Testis (tissue), 5 donors: ENCODE measurements at regions of chr3 and their contacts with region 1.

Region 1: GRCh38 chr3:50542177-50543034 is 25.1 kb downstream of the C3orf18 start:
- DNase-seq: peak; percentile 87
- H3K4me3 ChIP-seq: no peak overlapping the region
- H3K27ac ChIP-seq: no peak overlapping the region
- H3K4me1 ChIP-seq: no peaks in the 10 kb centered on the region
- H3K27me3 ChIP-seq: no peaks in the 10 kb centered on the region
- CTCF ChIP-seq: peak; percentile 81 to 87 (median 85)
- POLR2A ChIP-seq: no peak

Region 2: DNA sequence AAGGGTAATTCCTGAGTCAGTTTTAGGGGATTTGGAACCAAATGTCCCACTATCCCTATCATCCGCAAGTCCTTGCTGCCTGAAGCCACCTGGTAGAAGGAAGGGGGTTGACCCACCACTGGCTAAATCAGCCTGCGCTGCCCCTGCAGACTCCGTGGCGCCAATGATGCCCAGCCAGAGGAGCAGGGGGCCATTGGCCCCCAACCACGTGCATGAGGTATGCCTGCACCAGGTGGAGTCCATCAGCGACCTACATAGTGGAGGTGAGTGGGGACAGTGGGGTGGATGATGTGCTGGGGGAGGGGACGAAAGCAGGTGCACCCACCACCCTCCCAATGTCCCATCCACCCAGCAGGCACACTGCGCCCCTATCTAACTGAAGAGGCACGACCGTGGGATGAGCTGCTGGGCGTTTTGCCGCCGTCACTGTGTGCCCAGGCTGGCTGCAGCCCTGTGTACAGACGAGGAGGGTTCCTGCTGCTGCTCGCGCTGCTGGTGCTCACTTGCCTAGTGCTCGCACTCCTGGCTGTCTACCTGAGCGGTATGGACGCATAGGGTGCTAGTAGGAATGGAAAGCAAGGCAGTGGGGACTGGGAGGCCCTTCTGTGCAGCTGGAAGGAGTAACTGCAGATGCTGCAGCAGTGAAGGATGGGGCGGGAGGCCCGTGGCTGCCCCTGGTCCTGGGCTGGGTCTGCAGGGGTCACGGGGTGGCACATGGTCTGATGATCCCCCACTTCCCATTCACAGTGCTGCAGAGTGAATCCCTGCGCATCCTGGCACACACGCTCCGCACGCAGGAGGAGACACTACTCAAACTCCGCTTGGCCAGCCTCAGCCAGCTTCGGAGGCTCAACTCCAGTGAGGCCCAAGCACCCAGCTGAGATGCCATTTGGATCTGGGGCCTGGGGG is 255.8 kb before region 1 on chr3:
- intact Hi-C with region 1: no loop called
- DNase-seq: no peak
- H3K4me3 ChIP-seq: no peak overlapping the region
- H3K27ac ChIP-seq: no peak overlapping the region
- H3K4me1 ChIP-seq: peaks cover 14% of the 10 kb centered on the region
- H3K27me3 ChIP-seq: no peaks in the 10 kb centered on the region
- CTCF ChIP-seq: no peak
- POLR2A ChIP-seq: no peak

Region 3: GRCh38 chr3:50365080-50365841 is 177.1 kb before region 1 on chr3:
- intact Hi-C with region 1: loop called (anchors 10 kb)
- DNase-seq: peak; percentile 88
- H3K4me3 ChIP-seq: peak overlapping the region; percentile 45 to 60
- H3K27ac ChIP-seq: peak overlapping the region in 1 of 2 donors; percentile 51
- H3K4me1 ChIP-seq: peaks cover 7% of the 10 kb centered on the region
- H3K27me3 ChIP-seq: no peaks in the 10 kb centered on the region
- CTCF ChIP-seq: no peak
- POLR2A ChIP-seq: no peak

Region 4: GRCh38 chr3:50436114-50436674 is 106.2 kb before region 1 on chr3:
- intact Hi-C with region 1: loop called (anchors 5 kb)
- DNase-seq: peak; percentile 68
- H3K4me3 ChIP-seq: no peak overlapping the region
- H3K27ac ChIP-seq: no peak overlapping the region
- H3K4me1 ChIP-seq: peaks cover 8% of the 10 kb centered on the region
- H3K27me3 ChIP-seq: no peaks in the 10 kb centered on the region
- CTCF ChIP-seq: peak; percentile 67 to 81 (median 71)
- POLR2A ChIP-seq: no peak